Mammary epithelial cell (primary cell): ENCODE measurements at regions of chr16 and their contacts with region 1.

Region 1: GRCh38 chr16:30628627-30629540 is 18.7 kb upstream of the ZNF689 start:
- DNase-seq: peak; percentile 46
- H3K4me3 ChIP-seq: no peak overlapping the region
- H3K27ac ChIP-seq: no peak overlapping the region
- H3K4me1 ChIP-seq: peaks cover 5% of the 10 kb centered on the region
- H3K27me3 ChIP-seq: no peaks in the 10 kb centered on the region
- CTCF ChIP-seq: peak; percentile 97 to 98

Region 2: GRCh38 chr16:30534368-30535105 is 94.3 kb before region 1 on chr16 and contains the start of gene ZNF747:
- CTCF ChIA-PET with region 1: no interaction called
- dilution Hi-C with region 1: no loop called
- in situ Hi-C with region 1: no loop called
- intact Hi-C with region 1: loop called (anchors 1 kb)
- DNase-seq: peak; percentile 75
- H3K4me3 ChIP-seq: peak within 1 kb of the TSS; percentile 50 to 64 (median 57)
- H3K27ac ChIP-seq: peak within 1 kb of the TSS; percentile 71
- H3K4me1 ChIP-seq: peaks cover 15% of the 10 kb centered on the region
- H3K27me3 ChIP-seq: no peaks in the 10 kb centered on the region
- CTCF ChIP-seq: peak in 1 of 2 donors; percentile 7
- total RNA-seq, gene ZNF747: 6.7 to 11.0 TPM

Region 3: DNA sequence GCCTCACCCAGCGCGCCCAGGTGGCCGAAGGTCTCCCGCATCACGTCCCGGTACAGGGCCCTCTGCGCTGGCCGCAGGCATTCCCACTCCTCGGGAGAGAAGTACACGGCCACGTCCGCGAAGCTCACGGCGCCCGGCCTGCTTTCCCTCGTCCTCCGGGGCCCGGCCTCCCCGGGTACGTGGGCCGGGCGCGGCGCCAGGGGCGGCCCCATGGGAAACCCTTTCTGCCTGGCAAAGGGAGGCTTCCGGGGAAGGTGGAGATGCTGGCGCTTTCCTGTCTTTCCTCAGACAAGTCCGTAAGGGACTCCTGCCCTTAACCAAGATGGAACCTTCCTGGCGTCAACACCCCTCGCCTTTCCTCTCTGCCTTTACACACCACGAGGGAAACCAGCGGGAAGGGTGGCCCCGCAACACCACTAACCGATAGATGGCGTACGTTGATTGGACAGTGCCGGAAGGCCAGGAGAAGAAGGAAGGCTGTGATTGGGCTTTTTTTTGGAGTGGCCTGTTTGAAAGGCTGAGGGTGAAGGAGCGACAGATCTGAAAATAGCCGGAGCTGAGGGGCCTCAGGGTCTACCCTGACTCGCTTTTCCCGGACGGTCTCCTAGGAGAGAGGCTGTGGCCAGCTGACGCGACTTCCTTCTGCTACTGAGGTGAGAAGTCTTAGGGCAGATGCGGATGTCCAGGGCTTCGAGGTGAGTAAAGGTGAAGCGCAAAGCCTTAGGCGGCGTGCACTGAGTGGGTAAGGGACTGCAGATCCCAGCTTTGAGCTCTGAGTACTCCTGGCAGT is 43.3 kb before region 1 on chr16 and contains the start of gene ZNF785:
- CTCF ChIA-PET with region 1: no interaction called
- dilution Hi-C with region 1: no loop called
- in situ Hi-C with region 1: no loop called
- intact Hi-C with region 1: loop called (anchors 2 kb)
- DNase-seq: peak; percentile 99
- H3K4me3 ChIP-seq: peak within 1 kb of the TSS; percentile 39 to 69 (median 58)
- H3K27ac ChIP-seq: peak within 1 kb of the TSS; percentile 42
- H3K4me1 ChIP-seq: peaks cover 9% of the 10 kb centered on the region
- H3K27me3 ChIP-seq: no peaks in the 10 kb centered on the region
- CTCF ChIP-seq: peak in 1 of 2 donors; percentile 30
- total RNA-seq, gene ZNF785: 7.6 to 8.0 TPM

Region 4: DNA sequence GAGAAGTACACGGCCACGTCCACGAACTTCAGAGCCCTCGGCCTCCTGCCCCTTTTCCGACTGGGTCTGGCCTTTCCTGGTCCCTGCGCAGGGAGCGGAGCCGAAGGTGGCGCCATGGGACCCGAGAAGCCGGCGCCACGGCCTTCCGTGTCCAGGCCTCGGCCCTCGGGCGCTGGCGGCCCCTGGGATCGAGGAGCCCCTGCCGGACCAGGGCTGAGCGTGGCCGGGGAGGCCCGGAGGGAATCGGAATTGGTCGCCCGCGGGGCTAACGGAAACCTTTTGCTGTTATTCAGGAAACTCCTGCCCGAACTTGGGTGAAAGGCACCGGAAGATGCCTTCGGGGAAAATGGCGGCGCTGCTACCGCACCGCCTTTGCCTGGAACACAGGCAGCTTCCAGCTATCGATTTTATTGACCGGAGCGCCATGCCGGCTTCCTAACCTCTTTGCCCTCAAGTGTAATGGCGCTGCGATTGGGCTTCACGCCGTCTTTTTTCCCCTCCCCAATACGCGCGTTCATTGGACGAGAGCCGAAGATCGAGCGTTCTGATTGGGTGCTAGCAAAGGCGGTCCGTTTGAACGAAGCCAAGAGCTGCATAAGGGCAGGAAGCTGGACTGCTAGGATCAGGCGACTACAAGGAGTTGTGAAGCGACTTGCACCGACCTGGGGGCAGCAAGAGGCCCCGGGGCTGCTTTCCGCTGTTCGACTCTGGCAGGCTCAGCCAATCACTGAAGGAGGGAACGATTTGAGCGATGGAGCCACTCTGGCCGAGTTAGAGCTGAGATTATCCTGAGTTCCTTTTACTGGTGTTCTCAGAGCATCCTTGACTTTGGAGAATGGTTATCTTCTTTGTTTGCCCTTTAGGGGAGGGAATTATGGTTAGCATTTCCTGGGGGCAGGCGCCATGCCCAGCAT is 18.7 kb before region 1 on chr16 and contains the start of gene ZNF689:
- CTCF ChIA-PET with region 1: interaction called, 9 read pairs
- dilution Hi-C with region 1: no loop called
- in situ Hi-C with region 1: no loop called
- intact Hi-C with region 1: loop called (anchors 2 kb)
- DNase-seq: peak; percentile 95
- H3K4me3 ChIP-seq: peak within 1 kb of the TSS; percentile 86 to 92 (median 92)
- H3K27ac ChIP-seq: peak within 1 kb of the TSS; percentile 84
- H3K4me1 ChIP-seq: peaks cover 10% of the 10 kb centered on the region
- H3K27me3 ChIP-seq: no peaks in the 10 kb centered on the region
- CTCF ChIP-seq: peak in 1 of 2 donors; percentile 14
- total RNA-seq, gene ZNF689: 6.7 to 7.0 TPM

Region 5: DNA sequence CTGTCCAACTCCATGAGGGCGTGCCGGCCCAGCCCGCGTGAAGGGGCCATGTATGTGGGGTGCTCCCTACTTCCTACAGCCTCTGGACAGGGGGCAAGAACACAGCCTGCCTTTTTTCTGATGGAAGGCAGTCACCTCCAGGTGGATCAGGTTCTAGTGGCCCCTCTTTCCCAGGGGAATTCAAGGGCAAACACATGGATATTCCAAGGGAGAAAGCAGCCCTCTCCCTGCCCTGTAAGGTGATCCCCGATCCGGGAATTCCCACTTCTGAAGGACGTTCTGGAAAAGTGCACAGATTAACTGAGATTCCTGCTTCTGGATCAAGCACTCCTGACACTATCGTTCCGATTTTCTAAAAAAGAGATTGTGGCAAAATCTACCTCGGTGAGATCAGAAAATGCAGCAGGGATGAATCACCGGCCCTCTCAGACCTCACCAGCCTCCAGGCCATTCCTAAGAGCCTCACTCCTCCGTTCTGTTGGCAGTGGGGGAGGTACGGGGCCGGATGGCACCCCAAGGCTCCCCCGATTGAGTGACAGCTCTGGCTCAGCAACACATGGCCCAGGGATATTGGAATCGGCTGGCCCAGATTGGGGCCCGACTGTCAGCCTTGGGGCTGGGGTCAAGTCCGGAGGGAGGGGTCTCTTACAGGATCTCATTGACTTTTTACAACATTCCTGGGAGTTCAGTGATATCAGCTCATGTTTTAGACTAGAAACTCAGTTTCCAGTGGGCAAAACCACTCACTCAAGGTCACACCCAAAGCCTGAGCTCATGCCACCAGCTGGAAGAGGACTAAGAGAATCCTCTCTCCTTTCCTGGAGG is 369.2 kb after region 1 on chr16:
- CTCF ChIA-PET with region 1: no interaction called
- dilution Hi-C with region 1: no loop called
- in situ Hi-C with region 1: no loop called
- intact Hi-C with region 1: no loop called
- DNase-seq: peak; percentile 77
- H3K4me3 ChIP-seq: peak overlapping the region; percentile 45 to 68 (median 51)
- H3K27ac ChIP-seq: peak overlapping the region; percentile 85
- H3K4me1 ChIP-seq: peaks cover 42% of the 10 kb centered on the region
- H3K27me3 ChIP-seq: no peaks in the 10 kb centered on the region
- CTCF ChIP-seq: no peak